PC-9 (cell line): ENCODE measurements at regions of chr5 and their contacts with region 1.

Region 1: DNA sequence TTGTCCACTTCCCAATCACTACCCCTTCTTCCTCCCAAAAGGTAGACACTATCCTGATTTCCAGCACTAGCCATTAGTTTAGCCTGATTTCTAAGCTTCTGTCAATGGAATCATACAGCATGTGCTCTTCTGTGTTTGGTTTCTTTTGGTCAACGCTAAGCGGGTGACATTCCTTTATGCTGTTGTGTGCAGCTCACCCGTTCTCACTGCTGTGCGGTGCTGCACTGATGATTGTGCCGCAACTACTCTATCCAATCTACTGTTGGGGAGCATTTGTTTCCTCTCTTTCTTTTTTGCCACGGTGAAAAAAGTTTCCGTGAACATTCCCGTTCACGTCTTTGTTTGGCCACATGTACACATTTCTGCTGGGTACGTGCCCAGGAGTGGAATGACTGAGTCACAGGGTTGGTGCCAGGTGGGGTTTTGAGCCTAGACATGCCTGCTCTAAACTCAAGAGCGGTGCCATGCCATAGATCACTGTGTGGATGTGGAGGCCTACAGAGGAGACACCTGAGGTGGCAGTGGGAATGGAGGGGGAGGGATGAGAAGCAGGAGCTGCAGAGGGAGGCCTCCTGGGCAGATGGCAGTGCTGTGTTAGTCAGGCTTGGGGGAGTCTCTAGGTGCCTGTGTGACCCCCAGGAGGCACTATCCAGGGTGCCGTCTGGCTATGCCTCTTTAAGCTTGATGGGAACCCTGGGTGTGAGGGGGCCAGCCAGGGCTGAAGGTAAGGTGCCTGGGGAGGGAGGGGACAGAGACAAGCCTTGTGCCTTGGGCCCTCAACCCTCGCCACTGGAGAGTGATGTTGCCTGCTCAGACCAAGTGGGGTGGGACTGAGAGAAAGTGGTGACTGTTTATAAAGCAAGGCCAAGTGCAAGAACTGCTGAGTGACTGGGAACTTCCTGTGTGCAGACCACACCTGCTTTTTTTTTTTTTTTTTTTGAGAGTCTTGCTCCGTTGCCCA is 11.4 kb upstream of the ANKRD33B start:
- DNase-seq: peak; percentile 47 to 51
- H3K4me3 ChIP-seq: no peak overlapping the region
- H3K27ac ChIP-seq: peak overlapping the region; percentile 91
- H3K4me1 ChIP-seq: peaks cover 74% of the 10 kb centered on the region
- H3K27me3 ChIP-seq: no peaks in the 10 kb centered on the region
- CTCF ChIP-seq: no peak

Region 2: GRCh38 chr5:10301842-10302610 is 250.4 kb before region 1 on chr5:
- CTCF ChIA-PET with region 1: no interaction called
- POLR2A ChIA-PET with region 1: interaction called, 4 read pairs
- intact Hi-C with region 1: loop called (anchors 2 kb)
- DNase-seq: peak; percentile 75 to 98
- H3K4me3 ChIP-seq: no peak overlapping the region
- H3K27ac ChIP-seq: peak overlapping the region; percentile 13
- H3K4me1 ChIP-seq: peaks cover 40% of the 10 kb centered on the region
- H3K27me3 ChIP-seq: no peaks in the 10 kb centered on the region
- CTCF ChIP-seq: no peak

Region 3: DNA sequence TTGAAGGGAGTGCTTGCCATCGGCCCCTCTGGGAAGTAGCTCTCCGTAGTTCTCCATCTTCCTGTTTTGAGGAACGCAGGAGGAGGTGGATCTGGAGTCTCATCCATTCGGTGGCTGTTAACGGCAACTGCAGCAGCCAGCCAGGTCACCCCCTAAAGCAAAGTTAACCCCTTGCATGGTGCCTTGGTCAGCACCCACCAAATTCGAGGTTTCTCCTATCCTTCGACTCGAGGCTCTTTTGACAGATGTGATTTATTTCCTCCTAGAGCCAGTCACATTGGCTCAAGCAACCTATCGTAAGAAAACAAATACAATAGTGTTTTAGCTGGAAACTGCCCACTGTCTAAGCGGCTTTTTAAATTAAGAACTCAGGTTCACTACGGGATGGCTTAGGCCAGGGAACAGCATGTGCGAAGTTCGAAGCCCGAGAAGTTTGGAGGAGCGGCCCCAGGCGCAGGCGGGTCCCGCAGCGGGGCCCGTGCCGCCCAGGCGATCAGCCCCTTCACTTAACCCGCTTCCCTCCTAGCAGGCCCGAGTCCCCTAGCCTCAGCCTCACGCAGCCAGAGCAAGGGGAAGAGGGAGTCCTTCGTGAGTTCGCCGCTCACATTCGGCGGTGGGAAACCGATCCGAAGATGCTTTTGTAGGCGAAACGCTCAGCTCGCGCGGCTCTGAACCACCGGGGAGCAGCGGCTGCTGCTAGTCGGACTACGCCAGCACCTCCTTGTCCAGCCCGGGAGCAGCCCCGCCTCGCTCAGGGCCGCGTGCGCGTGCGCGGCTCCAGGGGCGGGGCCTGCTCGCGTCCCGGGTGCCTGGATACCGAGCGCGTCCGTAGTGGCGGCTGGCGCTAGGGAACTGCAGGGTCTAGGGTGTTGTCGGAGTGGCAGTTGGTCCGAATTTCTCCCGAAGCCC is 111.1 kb before region 1 on chr5 and contains the start of gene ROPN1L:
- CTCF ChIA-PET with region 1: no interaction called
- POLR2A ChIA-PET with region 1: no interaction called
- intact Hi-C with region 1: no loop called
- DNase-seq: peak; percentile 70 to 97
- H3K4me3 ChIP-seq: peak within 1 kb of the TSS; percentile 72
- H3K27ac ChIP-seq: no peak within 1 kb of the TSS
- H3K4me1 ChIP-seq: peaks cover 17% of the 10 kb centered on the region
- H3K27me3 ChIP-seq: no peaks in the 10 kb centered on the region
- CTCF ChIP-seq: no peak
- total RNA-seq, gene ROPN1L: 7.1 and 10.3 TPM in 2 replicates

Region 4: GRCh38 chr5:10467240-10468198 is 84.9 kb before region 1 on chr5:
- CTCF ChIA-PET with region 1: no interaction called
- POLR2A ChIA-PET with region 1: interaction called, 5 read pairs
- intact Hi-C with region 1: loop called (anchors 1 kb)
- DNase-seq: peak; percentile 73
- H3K4me3 ChIP-seq: no peak overlapping the region; the same call in 1 of the 2 replicates
- H3K27ac ChIP-seq: peak overlapping the region; percentile 80
- H3K4me1 ChIP-seq: peaks cover 22% of the 10 kb centered on the region
- H3K27me3 ChIP-seq: no peaks in the 10 kb centered on the region
- CTCF ChIP-seq: no peak

Region 5: GRCh38 chr5:10563945-10564837 is 11.7 kb after region 1 on chr5 and contains the start of gene ANKRD33B:
- CTCF ChIA-PET with region 1: interaction called, 4 read pairs
- POLR2A ChIA-PET with region 1: interaction called, 10 read pairs
- intact Hi-C with region 1: loop called (anchors 2 kb)
- DNase-seq: peak; percentile 72 to 95
- H3K4me3 ChIP-seq: peak within 1 kb of the TSS; percentile 90
- H3K27ac ChIP-seq: peak within 1 kb of the TSS; percentile 86
- H3K4me1 ChIP-seq: peaks cover 46% of the 10 kb centered on the region
- H3K27me3 ChIP-seq: no peaks in the 10 kb centered on the region
- CTCF ChIP-seq: no peak
- total RNA-seq, gene ANKRD33B: 32.1 and 37.4 TPM in 2 replicates

Region 6: DNA sequence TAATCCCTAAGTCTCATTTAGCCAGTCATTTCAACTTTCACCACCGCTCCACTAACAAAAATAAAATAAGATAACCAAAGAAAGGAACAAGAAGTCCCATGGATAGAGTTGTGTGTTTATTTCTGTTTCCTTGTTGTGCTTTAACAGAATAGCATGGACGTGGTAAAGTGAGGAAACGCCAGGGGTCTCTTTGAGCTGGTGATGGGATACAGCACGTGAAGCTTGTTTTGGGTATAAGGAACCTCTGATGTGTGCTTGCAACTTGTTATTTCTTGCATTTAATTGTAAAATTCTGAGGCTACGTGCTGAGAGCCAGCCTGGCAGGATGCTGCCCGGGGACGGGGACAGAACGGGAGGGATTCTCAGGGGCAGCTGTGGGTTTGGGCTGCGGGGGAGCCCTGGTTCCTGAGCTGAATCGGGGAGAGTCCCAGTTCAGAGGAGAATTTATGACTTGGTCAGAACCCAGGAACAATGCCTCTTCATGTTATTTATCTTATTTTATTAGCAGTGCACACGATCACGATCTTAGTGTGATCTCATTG is 74.8 kb after region 1 on chr5:
- CTCF ChIA-PET with region 1: interaction called, 7 read pairs
- POLR2A ChIA-PET with region 1: interaction called, 8 read pairs
- intact Hi-C with region 1: loop called (anchors 1 kb)
- DNase-seq: no peak
- H3K4me3 ChIP-seq: no peak overlapping the region
- H3K27ac ChIP-seq: peak overlapping the region; percentile 5; the same call in 1 of the 2 replicates
- H3K4me1 ChIP-seq: peaks cover 7% of the 10 kb centered on the region; the same call in 1 of the 2 replicates
- H3K27me3 ChIP-seq: no peaks in the 10 kb centered on the region
- CTCF ChIP-seq: no peak

Region 7: GRCh38 chr5:10649666-10650380 is 97.4 kb after region 1 on chr5:
- CTCF ChIA-PET with region 1: no interaction called
- POLR2A ChIA-PET with region 1: no interaction called
- intact Hi-C with region 1: no loop called
- DNase-seq: no peak
- H3K4me3 ChIP-seq: no peak overlapping the region
- H3K27ac ChIP-seq: no peak overlapping the region
- H3K4me1 ChIP-seq: no peaks in the 10 kb centered on the region
- H3K27me3 ChIP-seq: no peaks in the 10 kb centered on the region
- CTCF ChIP-seq: no peak